ENCODE measurements at regions of chr21 and their contacts with region 1.

Region 1: GRCh38 chr21:25283720-25284119 is 323.6 kb downstream of the MRPL39 start:
- DNase-seq: peak; percentile 0
- ATAC-seq: no peak
- H3K4me3 ChIP-seq: no peak overlapping the region
- H3K27ac ChIP-seq: no peak overlapping the region
- H3K4me1 ChIP-seq: no peaks in the 10 kb centered on the region
- H3K27me3 ChIP-seq: no peaks in the 10 kb centered on the region; a peak in 1 of 5 replicates
- CTCF ChIP-seq: no peak
- EP300 ChIP-seq: no peak
- POLR2A ChIP-seq: no peak
- RAD21 ChIP-seq: no peak

Region 2: DNA sequence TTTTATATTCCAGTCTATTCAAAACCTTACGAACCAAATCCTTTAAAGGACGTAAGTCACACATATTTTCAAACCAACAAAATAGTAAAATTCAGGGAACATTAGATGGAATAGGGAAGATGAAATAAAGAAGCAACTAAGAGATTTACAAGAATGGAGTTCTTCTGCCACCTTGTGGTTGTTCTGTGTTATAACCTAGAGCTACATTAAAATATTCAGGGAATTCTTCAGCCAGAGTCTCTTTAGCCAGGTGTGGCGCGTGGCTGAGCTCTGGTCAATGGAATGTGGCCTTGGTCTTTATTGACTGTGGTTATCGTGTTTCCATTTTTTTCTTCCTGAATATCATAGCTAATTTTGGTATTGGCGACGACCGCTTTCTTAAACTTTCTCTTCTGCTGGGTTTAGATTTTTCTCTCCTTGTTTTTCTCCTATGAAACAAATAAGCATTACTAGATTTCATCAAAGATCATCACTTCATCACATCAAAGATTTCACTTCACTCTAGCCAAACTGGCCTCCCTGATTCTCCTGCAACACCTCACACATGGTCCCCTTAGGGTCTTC is 102.3 kb after region 1 on chr21:
- CTCF ChIA-PET with region 1: no interaction called
- POLR2A ChIA-PET with region 1: no interaction called
- in situ Hi-C with region 1: no loop called
- intact Hi-C with region 1: loop called (anchors 5 kb)
- DNase-seq: peak; percentile 72
- ATAC-seq: peak; percentile 99
- H3K4me3 ChIP-seq: no peak overlapping the region
- H3K27ac ChIP-seq: no peak overlapping the region
- H3K4me1 ChIP-seq: peaks cover 5% of the 10 kb centered on the region; the same call in 1 of the 2 replicates
- H3K27me3 ChIP-seq: no peaks in the 10 kb centered on the region
- CTCF ChIP-seq: peak; percentile 66
- EP300 ChIP-seq: no peak
- POLR2A ChIP-seq: no peak
- RAD21 ChIP-seq: 0 out of 2 replicates have a peak, but pooled peaks have one; percentile 49